HEK293 (cell line): ENCODE measurements at regions of chr19 and their contacts with region 1.

Region 1: DNA sequence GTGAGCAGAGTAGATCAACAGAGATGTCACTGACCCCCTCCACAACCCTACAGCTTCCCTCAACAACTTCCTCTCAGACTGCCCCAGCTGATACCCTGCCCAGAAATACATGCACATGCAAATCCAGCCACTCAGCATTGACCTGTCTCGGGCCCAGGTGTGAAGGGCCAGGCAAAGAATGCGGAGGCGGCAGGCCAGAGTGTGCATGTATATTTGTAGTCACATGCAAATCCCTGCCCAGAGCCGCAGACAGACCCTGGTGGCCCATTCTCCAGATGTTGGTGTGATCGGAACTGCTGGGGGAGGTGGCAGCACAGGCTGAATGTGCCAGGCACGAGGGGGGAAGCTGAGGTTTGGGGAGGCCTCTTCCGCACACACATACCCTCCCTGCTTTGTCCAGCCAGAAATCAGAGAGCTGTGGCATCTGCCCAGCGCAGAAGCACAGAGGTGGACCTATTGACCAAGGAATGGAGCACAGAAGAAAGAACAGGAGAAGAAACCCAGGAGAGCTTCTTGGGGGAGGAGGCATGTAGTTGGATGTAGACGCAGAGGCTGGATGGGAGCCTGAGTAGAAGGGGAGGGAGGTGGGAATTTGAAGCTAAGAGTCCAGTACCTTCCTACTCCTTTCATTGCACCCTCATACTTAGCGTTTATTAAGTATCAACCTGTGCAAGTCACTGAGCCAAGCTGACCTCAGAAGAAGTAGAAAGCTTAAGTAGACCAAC is 14.4 kb downstream of the MEF2B start:
- H3K4me3 ChIP-seq: no peak overlapping the region
- H3K27ac ChIP-seq: no peak overlapping the region
- H3K4me1 ChIP-seq: no peaks in the 10 kb centered on the region
- CTCF ChIP-seq: no peak

Region 2: DNA sequence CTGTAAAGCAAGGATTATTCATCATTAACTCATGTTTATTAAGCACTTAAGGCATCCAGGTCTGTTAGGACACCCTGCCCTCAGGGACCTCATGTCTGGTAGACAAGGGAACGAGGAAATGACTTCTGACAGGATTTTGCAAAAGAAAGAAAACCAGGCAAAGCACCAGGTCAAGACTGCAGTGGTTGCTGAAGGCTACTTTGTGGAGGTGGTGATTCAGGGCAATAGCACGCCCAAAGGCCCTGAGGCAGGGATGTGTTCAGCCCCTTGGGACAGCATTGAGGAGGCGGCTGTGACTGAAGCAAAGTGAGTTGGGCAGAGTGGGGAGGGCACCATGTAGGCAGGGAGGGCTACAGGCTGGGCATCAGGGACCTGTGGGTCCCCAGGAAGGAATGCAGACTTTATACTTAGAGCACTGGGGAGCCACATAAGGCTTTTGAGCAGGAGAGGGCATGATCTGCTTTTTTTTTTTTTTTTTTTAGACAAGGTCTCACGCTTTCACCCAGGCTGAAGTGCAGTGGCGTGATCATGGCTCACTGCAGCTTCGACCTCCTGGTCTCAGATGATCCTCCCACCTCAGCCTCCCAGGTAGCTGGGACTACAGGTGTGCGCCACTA is 203.9 kb before region 1 on chr19:
- CTCF ChIA-PET with region 1: no interaction called
- POLR2A ChIA-PET with region 1: no interaction called
- H3K4me3 ChIP-seq: no peak overlapping the region
- H3K27ac ChIP-seq: no peak overlapping the region
- H3K4me1 ChIP-seq: no peaks in the 10 kb centered on the region
- CTCF ChIP-seq: no peak

Region 3: GRCh38 chr19:18995804-18996241 is 159.8 kb before region 1 on chr19:
- CTCF ChIA-PET with region 1: no interaction called
- POLR2A ChIA-PET with region 1: no interaction called
- H3K4me3 ChIP-seq: no peak overlapping the region
- H3K27ac ChIP-seq: no peak overlapping the region
- H3K4me1 ChIP-seq: no peaks in the 10 kb centered on the region
- CTCF ChIP-seq: 0 out of 2 replicates have a peak, but pooled peaks have one; percentile 19

Region 4: GRCh38 chr19:19105365-19106055 is 50.1 kb before region 1 on chr19:
- CTCF ChIA-PET with region 1: no interaction called
- POLR2A ChIA-PET with region 1: no interaction called
- H3K4me3 ChIP-seq: no peak overlapping the region
- H3K27ac ChIP-seq: no peak overlapping the region
- H3K4me1 ChIP-seq: no peaks in the 10 kb centered on the region
- CTCF ChIP-seq: no peak

Region 5: DNA sequence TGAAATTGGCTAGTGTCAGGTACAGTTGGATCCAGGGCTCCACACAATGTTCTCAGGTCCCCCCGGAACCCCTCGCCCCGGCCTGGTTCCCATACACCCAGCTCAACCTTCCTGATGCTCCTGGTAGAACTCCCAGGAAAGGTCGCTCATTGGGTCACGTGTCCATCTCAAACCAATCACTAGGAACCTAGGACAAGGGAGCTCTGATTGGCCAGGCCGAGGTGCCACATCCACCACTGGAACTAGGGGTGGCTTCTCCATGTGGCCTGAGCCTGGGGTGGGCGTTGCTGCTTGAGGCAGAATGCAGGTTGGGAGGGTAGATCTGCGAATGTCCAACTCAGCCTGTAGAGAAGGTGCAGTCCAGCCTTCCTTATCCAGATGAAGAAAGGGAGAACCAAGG is 21.3 kb after region 1 on chr19:
- CTCF ChIA-PET with region 1: interaction called, 41 read pairs
- POLR2A ChIA-PET with region 1: interaction called, 4 read pairs
- H3K4me3 ChIP-seq: no peak overlapping the region
- H3K27ac ChIP-seq: no peak overlapping the region
- H3K4me1 ChIP-seq: no peaks in the 10 kb centered on the region
- CTCF ChIP-seq: no peak

Region 6: DNA sequence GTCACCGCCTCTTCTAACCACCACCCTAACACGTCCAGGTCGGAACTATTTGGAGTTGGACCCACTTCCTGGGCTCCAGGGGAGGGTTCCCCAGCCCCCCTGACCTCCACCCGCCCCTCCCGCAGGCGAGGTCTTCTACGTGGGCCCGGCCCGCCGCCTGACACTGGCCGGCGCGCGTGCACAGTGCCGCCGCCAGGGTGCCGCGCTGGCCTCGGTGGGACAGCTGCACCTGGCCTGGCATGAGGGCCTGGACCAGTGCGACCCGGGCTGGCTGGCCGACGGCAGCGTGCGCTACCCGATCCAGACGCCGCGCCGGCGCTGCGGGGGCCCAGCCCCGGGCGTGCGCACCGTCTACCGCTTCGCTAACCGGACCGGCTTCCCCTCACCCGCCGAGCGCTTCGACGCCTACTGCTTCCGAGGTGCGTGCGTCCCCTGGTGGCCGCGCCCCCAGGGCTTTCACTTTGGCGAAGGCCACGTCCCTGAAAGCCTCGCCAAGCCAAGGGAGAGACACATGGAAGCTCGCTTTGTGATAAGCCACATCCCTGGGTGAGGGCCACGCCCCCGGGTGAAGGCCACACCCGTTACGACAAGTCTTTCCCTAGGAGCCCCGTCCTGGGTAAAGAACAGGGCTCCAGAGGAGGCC is 69.3 kb after region 1 on chr19:
- CTCF ChIA-PET with region 1: interaction called, 14 read pairs
- POLR2A ChIA-PET with region 1: no interaction called
- H3K4me3 ChIP-seq: peak overlapping the region; percentile 19; the same call in 1 of the 2 replicates
- H3K27ac ChIP-seq: no peak overlapping the region
- H3K4me1 ChIP-seq: no peaks in the 10 kb centered on the region
- CTCF ChIP-seq: peak; percentile 82